ENCODE measurements at regions of chr16 and their contacts with region 1.

Region 1: GRCh38 chr16:67017810-67018488 is 11.0 kb upstream of the CBFB start:
- DNase-seq: peak; percentile 86 to 88
- H3K4me3 ChIP-seq: no peak overlapping the region
- H3K27ac ChIP-seq: no peak overlapping the region
- H3K4me1 ChIP-seq: peaks cover 7% of the 10 kb centered on the region
- H3K27me3 ChIP-seq: peaks cover 19% of the 10 kb centered on the region
- CTCF ChIP-seq: peak; percentile 85

Region 2: DNA sequence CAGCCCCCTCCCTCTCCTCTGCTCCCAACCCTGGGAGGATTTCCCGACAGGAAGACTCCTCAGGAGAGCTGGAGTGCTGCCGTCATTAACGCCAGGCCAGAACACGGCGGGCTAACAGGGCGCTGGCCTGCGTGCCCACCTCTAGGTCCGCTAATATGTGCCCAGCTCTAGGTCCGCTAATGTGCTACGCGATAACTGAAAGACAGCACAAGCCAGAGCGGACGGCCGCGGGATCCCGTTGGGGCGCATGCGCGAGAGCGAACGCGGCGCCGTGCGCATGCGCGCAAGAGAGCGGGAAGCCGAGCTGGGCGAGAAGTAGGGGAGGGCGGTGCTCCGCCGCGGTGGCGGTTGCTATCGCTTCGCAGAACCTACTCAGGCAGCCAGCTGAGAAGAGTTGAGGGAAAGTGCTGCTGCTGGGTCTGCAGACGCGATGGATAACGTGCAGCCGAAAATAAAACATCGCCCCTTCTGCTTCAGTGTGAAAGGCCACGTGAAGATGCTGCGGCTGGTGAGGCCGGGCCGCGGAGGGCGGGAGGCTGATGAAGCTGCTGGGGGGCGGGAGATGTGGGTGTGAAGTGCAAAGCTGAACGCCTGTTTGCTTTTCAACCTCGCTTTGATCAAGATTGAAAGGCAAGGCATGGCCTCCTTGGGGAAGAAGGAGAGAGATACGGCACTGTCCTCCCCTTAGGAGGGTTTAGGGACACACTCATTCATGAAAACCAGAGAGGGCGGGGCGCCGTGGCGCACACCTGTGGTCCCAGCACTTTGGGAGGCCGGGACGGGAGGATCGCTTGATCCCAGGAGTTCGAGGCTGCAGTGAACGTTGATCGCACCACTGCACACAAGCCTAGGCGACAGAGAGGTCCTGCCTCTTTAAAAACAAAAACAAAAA is 465.4 kb before region 1 on chr16 and contains the start of gene CKLF:
- CTCF ChIA-PET with region 1: no interaction called
- POLR2A ChIA-PET with region 1: interaction called, 21 read pairs
- intact Hi-C with region 1: no loop called
- DNase-seq: peak; percentile 75 to 91
- H3K4me3 ChIP-seq: peak within 1 kb of the TSS; percentile 66
- H3K27ac ChIP-seq: no peak within 1 kb of the TSS
- H3K4me1 ChIP-seq: peaks cover 30% of the 10 kb centered on the region
- H3K27me3 ChIP-seq: no peaks in the 10 kb centered on the region
- CTCF ChIP-seq: no peak
- total RNA-seq, gene CKLF: 77.1 and 86.4 TPM in 2 replicates

Region 3: DNA sequence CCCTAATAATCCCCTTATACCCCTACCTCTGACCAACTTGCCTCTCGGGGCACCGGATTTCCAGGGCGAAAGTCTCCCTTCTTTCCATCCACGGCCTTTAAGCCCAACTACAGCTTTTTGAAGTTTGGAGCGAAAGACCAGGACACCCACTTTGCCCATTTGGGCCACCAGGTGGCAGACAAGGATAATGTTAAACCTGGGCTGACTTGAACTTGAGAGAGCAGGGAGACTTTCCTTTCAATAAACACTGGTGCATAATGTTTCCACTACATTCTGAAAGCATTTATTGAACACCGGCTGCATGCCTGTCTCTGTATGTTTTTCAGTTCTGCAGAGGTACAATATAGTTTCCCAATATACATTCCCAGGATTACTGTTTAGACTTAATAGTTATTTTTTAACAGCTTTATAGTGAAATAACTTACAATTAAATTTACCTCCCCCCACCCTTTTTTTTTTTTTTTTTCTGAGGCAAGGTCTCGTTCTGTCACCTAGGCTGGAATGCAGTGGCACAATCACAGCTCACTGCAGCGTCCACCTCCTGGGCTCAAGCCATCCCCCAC is 63.8 kb before region 1 on chr16:
- CTCF ChIA-PET with region 1: interaction called, 9 read pairs
- POLR2A ChIA-PET with region 1: no interaction called
- intact Hi-C with region 1: loop called (anchors 1 kb)
- DNase-seq: peak; percentile 55 to 81
- H3K4me3 ChIP-seq: no peak overlapping the region
- H3K27ac ChIP-seq: no peak overlapping the region
- H3K4me1 ChIP-seq: no peaks in the 10 kb centered on the region
- H3K27me3 ChIP-seq: no peaks in the 10 kb centered on the region
- CTCF ChIP-seq: peak; percentile 88

Region 4: GRCh38 chr16:67159593-67160406 is 141.9 kb after region 1 on chr16 and contains the starts of genes FBXL8 and TRADD:
- CTCF ChIA-PET with region 1: interaction called, 9 read pairs
- POLR2A ChIA-PET with region 1: no interaction called
- intact Hi-C with region 1: loop called (anchors 1 kb)
- DNase-seq: peak; percentile 57 to 85
- H3K4me3 ChIP-seq: peak within 1 kb of the TSS; percentile 66
- H3K27ac ChIP-seq: peak within 1 kb of the TSS; percentile 60
- H3K4me1 ChIP-seq: peaks cover 9% of the 10 kb centered on the region
- H3K27me3 ChIP-seq: no peaks in the 10 kb centered on the region
- CTCF ChIP-seq: peak; percentile 67; the same call in 1 of the 2 replicates
- total RNA-seq, gene FBXL8: 53.2 and 54.4 TPM in 2 replicates
- total RNA-seq, gene TRADD: 38.0 and 50.3 TPM in 2 replicates

Region 5: DNA sequence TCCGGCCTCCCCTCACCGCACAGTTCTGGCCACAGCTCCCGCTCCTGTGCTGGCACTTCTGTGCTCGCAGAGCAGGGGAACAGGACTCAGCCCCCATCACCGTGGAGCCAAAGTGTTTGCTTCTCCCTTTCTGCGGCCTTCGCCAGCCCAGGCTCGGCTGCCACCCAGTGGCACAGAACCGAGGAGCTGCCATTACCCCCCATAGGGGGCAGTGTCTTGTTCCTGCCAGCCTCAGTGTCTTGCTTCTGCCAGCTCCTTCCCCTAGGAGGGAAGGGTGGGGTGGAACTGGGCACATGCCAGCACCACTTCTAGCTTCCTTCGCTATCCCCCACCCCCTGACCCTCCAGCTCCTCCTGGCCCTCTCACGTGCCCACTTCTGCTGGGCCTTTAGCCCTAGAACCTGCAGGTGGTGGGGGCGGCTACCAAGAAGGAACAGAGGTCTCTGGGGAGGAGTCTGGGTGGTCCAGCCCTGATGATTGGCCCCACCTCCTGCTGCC is 180.3 kb after region 1 on chr16:
- CTCF ChIA-PET with region 1: interaction called, 4 read pairs
- POLR2A ChIA-PET with region 1: no interaction called
- intact Hi-C with region 1: loop called (anchors 2 kb)
- DNase-seq: peak; percentile 43 to 74
- H3K4me3 ChIP-seq: peak overlapping the region; percentile 89; the same call in 1 of the 2 replicates
- H3K27ac ChIP-seq: peak overlapping the region; percentile 75
- H3K4me1 ChIP-seq: peaks cover 49% of the 10 kb centered on the region
- H3K27me3 ChIP-seq: no peaks in the 10 kb centered on the region
- CTCF ChIP-seq: peak; percentile 78

Region 6: GRCh38 chr16:67470359-67470758 is 452.4 kb after region 1 on chr16:
- CTCF ChIA-PET with region 1: no interaction called
- POLR2A ChIA-PET with region 1: no interaction called
- intact Hi-C with region 1: loop called (anchors 5 kb)
- DNase-seq: no peak
- H3K4me3 ChIP-seq: no peak overlapping the region
- H3K27ac ChIP-seq: no peak overlapping the region
- H3K4me1 ChIP-seq: 0 out of 2 replicates have a peak, but pooled peaks cover 4% of the 10 kb centered on the region
- H3K27me3 ChIP-seq: no peaks in the 10 kb centered on the region
- CTCF ChIP-seq: no peak

Region 7: GRCh38 chr16:68328151-68328859 is 1310.4 kb after region 1 on chr16:
- CTCF ChIA-PET with region 1: no interaction called
- POLR2A ChIA-PET with region 1: no interaction called
- intact Hi-C with region 1: no loop called
- DNase-seq: peak; percentile 75 to 88
- H3K4me3 ChIP-seq: no peak overlapping the region
- H3K27ac ChIP-seq: 0 out of 2 replicates have a peak overlapping the region, but pooled peaks have one; percentile 25
- H3K4me1 ChIP-seq: peaks cover 6% of the 10 kb centered on the region
- H3K27me3 ChIP-seq: no peaks in the 10 kb centered on the region
- CTCF ChIP-seq: peak; percentile 91

Measured in PC-9 (cell line).